ENCODE measurements at regions of chr3 and their contacts with region 1.

Region 1: DNA sequence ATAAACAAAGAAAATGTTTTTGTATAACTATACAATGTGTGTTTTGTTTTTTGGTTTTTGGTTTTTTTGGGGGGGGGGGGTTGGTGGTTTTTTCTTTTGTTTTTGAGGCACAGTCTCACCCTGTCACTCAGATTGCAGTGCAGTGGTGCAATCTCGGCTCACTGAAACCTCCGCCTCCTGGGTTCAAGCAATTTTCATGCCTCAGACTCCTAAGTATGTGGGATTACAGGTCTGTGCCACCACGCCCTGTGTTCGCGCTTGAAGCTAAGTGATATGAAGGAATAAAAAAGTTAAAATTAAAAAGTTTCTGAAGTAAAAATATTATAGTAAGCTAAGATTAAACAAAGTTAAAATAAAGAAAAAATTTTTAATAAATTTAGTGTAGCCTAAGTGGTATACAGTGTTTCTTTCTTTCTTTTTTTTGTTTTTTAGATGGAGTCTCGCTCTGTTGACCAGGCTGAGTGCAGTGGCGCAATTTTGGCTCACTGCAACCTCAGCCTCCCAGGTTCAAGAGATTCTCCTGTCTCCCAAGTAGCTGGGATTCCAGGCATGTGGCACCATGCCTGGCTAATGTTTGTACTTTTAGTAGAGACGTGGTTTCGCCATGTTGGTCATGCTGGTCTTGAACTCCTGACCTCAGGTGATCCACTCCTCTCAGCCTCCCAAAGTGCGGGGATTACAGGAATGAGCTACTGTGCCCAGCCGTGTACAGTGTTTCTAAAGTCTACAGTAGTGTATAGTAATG is 53.9 kb upstream of the TEX55 start:
- DNase-seq: no peak
- H3K4me3 Mint-ChIP-seq: no peak overlapping the region
- H3K27ac Mint-ChIP-seq: no peak overlapping the region
- H3K4me1 Mint-ChIP-seq: no peaks in the 10 kb centered on the region
- H3K27me3 Mint-ChIP-seq: no peaks in the 10 kb centered on the region

Region 2: GRCh38 chr3:118900737-118901525 is 191.2 kb before region 1 on chr3:
- CTCF ChIA-PET with region 1: no interaction called
- POLR2A ChIA-PET with region 1: no interaction called
- intact Hi-C with region 1: no loop called
- DNase-seq: peak; percentile 15
- H3K4me3 Mint-ChIP-seq: no peak overlapping the region
- H3K27ac Mint-ChIP-seq: no peak overlapping the region
- H3K4me1 Mint-ChIP-seq: peaks cover 6% of the 10 kb centered on the region
- H3K27me3 Mint-ChIP-seq: peaks cover 2% of the 10 kb centered on the region

Region 3: GRCh38 chr3:119069725-119070124 is 22.4 kb before region 1 on chr3:
- CTCF ChIA-PET with region 1: no interaction called
- POLR2A ChIA-PET with region 1: no interaction called
- intact Hi-C with region 1: loop called (anchors 1 kb)
- DNase-seq: no peak
- H3K4me3 Mint-ChIP-seq: no peak overlapping the region
- H3K27ac Mint-ChIP-seq: no peak overlapping the region
- H3K4me1 Mint-ChIP-seq: no peaks in the 10 kb centered on the region
- H3K27me3 Mint-ChIP-seq: peaks cover 13% of the 10 kb centered on the region

Region 4: DNA sequence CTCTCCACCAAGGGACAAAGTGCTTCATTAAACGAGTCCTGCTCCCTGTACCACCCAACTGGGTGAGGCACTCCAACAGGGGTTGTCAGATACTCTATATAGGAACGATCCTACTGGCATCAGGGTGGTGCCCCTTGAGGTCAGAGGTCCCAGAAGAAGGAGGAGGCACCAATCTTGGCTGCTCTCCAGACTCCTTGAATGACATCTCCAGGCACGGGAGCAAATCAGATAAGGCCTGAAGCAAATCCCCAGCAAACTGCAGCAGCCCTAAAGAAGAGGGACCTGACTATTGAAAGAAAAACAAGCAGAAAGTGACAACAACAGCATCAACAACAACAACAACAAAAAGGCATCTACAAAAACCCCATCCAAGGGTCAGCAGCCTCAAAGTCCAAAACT is 34.4 kb after region 1 on chr3:
- CTCF ChIA-PET with region 1: no interaction called
- POLR2A ChIA-PET with region 1: no interaction called
- intact Hi-C with region 1: no loop called
- DNase-seq: no peak
- H3K4me3 Mint-ChIP-seq: no peak overlapping the region
- H3K27ac Mint-ChIP-seq: no peak overlapping the region
- H3K4me1 Mint-ChIP-seq: no peaks in the 10 kb centered on the region
- H3K27me3 Mint-ChIP-seq: peaks cover 11% of the 10 kb centered on the region

Measured in activated CD4-positive, alpha-beta memory T cell treated with anti-CD3 and anti-CD28 coated beads for 36 hours (primary cell).